ENCODE measurements at regions of chr17 and their contacts with region 1.

Region 1: GRCh38 chr17:41648411-41649195 is 24.2 kb upstream of the KRT17 start:
- DNase-seq: peak; percentile 88

Region 2: GRCh38 chr17:41567317-41567716 is 81.3 kb before region 1 on chr17:
- CTCF ChIA-PET with region 1: interaction called, 10 read pairs
- POLR2A ChIA-PET with region 1: no interaction called
- DNase-seq: no peak

Region 3: DNA sequence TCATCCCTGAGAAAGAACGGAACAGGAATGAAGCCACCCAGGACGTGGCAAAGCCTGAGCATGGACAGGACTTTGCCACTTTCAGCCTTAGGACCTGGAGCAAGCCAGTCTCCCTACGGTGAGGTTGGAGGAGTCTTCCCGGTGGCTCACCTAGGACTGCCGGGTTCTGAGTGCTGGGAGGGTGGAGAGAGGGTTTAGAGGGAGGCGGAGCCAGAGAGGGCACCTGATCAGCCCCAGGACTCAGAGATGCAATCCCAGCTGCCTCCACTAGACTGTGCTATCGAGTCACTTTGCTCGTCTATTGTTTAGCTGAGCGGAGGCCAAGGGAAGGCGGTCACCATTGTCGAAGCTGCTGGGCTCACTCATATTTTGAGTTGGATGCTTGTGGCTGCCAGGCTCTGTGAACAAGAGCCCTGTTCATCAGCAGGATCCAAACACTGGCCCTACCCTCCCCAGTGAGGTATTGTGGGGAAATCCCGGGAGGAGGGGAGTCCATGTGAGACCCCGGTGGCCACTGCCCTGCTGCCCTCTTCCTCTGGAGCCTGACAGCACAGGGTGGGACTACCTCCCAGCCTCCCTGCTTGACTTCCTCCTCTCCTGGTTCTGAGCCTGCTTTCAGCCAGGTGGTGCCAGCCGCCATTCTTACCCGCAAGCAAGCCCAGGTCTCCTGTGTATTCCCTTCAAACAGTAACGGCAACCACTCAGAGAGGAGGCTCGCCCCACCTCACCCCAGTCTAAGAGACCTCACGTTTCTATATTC is 68.9 kb before region 1 on chr17:
- CTCF ChIA-PET with region 1: interaction called, 16 read pairs
- POLR2A ChIA-PET with region 1: interaction called, 6 read pairs
- DNase-seq: peak; percentile 96

Region 4: GRCh38 chr17:41665566-41666236 is 17.1 kb after region 1 on chr17:
- CTCF ChIA-PET with region 1: interaction called, 104 read pairs
- POLR2A ChIA-PET with region 1: interaction called, 7 read pairs
- DNase-seq: peak; percentile 97

Region 5: GRCh38 chr17:41738077-41738735 is 89.6 kb after region 1 on chr17:
- CTCF ChIA-PET with region 1: no interaction called
- POLR2A ChIA-PET with region 1: no interaction called
- DNase-seq: peak; percentile 90